ENCODE measurements at regions of chr1 and their contacts with region 1.

Region 1: DNA sequence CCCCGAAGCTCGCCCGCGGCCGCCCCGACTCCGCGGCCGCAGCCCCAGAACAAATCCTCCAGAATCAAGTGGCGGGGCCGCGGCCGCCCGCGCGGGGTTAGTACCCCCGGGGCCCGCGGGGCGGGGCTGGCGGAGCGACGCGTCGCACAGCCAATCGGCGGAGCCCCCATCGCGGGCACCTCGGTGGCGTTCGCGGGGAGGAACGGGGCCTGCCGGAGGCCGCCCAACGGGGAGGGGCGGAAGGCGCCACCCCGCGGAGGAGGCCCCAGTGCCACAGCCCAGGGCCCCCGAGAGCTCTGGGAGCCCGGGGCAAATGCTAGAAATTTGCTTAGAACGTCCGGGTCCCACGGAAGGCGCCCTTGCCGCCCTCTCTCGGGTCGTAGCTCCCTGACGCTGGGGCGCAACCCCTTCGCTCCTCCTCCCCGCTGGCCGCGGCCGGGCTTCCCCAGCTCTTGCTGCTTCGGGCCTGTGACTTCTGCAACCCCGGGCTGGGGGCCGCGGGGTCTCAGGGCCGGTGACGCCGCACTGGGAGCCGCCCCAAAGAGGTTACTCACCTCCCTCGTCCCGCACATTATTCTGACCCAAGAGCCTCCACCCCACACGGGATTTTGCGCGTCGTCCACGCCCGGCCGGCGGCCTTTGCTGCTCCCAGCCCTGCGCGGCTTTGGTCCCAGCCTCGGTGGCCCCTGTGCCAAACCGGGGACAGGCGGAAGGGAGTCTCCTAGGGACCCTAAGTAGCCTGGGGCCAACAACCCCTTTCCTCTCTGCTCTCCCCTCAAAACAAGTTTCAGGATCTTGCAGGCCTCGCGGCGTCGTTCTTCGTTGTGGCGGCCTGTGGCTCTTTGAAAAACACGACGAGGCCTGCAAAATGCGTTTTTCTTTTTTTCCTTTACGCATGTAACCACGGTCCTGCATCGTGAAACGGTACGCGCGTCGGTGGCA is at the start of gene RUNX3:
- DNase-seq: peak in 1 of 2 experiments; percentile 83
- H3K4me3 ChIP-seq: peak within 1 kb of the TSS; percentile 27 to 61 (median 40)
- H3K27ac ChIP-seq: no peak within 1 kb of the TSS
- H3K4me1 ChIP-seq: peaks cover 6 to 67% (median 46%) of the 10 kb centered on the region in 4 experiments
- H3K27me3 ChIP-seq: peaks cover 68 to 97% (median 91%) of the 10 kb centered on the region in 4 experiments
- CTCF ChIP-seq: no peak
- EP300 ChIP-seq: no peak
- POLR2A ChIP-seq: no peak
- RAD21 ChIP-seq: no peak
- total RNA-seq, gene RUNX3: 0.48 and 0.82 TPM in 2 replicates

Region 2: GRCh38 chr1:24897767-24898483 is 32.5 kb before region 1 on chr1:
- CTCF ChIA-PET with region 1: interaction called, 19 read pairs
- POLR2A ChIA-PET with region 1: no interaction called
- DNase-seq: peak; percentile 10 to 89
- H3K4me3 ChIP-seq: no peak overlapping the region
- H3K27ac ChIP-seq: no peak overlapping the region
- H3K4me1 ChIP-seq: no peaks in the 10 kb centered on the region; a peak in 1 of 7 replicates
- H3K27me3 ChIP-seq: no peaks in the 10 kb centered on the region
- CTCF ChIP-seq: peak; percentile 87 to 98 (median 98)
- EP300 ChIP-seq: no peak
- POLR2A ChIP-seq: no peak
- RAD21 ChIP-seq: peak; percentile 65 to 78

Region 3: DNA sequence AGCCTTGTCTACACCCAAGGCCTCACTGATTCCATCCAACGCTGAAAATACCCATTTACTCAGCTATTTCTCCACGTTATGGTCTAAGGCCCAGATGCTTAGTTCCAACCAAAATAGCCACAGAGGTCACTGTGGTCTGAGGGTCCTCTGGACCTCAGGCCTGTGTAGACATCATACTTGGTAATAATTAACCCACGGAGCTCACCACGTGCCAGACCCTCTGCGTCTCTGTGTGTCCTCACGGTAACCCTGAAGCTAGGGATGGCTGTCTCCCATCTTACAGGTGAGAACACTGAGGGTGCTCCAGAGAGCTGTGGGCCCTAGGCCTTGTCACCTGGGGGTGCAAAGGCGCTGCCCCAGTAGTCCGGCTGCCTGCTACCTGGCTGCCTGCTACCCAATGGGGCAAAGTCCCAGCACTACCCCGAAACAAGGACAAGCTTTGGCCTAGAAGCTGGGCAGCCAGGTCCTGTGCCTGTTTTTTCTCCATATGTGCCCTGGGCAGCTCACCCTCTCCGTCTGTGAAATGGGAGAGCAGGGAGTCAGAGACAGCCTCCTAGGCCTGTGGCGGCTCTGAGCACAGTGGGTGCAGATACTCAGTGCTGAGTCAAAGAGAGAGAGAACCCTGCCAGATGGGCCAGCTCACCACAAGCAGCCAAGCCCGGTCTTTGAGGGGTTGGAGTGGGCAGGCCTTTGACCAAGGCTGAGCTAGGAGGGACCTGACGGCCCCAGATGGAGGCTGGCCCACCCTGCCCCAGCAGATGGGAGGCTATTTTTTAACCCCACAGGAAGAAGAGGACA is 16.6 kb after region 1 on chr1:
- CTCF ChIA-PET with region 1: interaction called, 19 read pairs
- POLR2A ChIA-PET with region 1: interaction called, 3 read pairs
- DNase-seq: no peak
- H3K4me3 ChIP-seq: no peak overlapping the region
- H3K27ac ChIP-seq: no peak overlapping the region
- H3K4me1 ChIP-seq: peaks cover 0 to 18% (median 9%) of the 10 kb centered on the region in 4 experiments; a peak in 5 of 7 replicates
- H3K27me3 ChIP-seq: no peaks in the 10 kb centered on the region
- CTCF ChIP-seq: no peak
- EP300 ChIP-seq: no peak
- POLR2A ChIP-seq: no peak
- RAD21 ChIP-seq: no peak

Region 4: DNA sequence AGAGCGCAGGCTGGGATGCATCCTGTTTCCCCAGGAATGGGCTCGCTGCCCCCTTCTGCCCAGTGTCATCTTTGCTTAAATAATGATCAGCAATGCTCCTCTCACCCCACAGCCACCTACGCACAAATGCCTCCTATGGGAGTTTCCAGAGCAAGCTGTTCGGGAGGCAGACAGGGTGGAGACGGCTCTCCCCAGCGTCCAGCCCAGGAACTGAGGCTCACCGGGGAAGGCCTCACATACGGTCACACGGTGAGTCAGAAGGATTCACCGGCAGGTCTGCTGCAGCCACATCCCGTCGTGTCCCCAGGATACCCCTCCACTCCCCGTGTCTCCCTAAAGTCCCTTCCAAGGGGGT is 39.9 kb after region 1 on chr1:
- CTCF ChIA-PET with region 1: interaction called, 20 read pairs
- POLR2A ChIA-PET with region 1: interaction called, 3 read pairs
- DNase-seq: peak in 1 of 2 experiments; percentile 23
- H3K4me3 ChIP-seq: no peak overlapping the region
- H3K27ac ChIP-seq: no peak overlapping the region
- H3K4me1 ChIP-seq: peaks cover 0 to 24% (median 11%) of the 10 kb centered on the region in 4 experiments; a peak in 6 of 7 replicates
- H3K27me3 ChIP-seq: no peaks in the 10 kb centered on the region; a peak in 1 of 7 replicates
- CTCF ChIP-seq: peak in 1 of 3 experiments; percentile 0; a peak in 1 of 4 replicates
- EP300 ChIP-seq: no peak
- POLR2A ChIP-seq: no peak
- RAD21 ChIP-seq: no peak; a peak in 1 of 4 replicates

Measured in H1 (cell line).